ENCODE measurements at regions of chr6 and their contacts with region 1.

Region 1: DNA sequence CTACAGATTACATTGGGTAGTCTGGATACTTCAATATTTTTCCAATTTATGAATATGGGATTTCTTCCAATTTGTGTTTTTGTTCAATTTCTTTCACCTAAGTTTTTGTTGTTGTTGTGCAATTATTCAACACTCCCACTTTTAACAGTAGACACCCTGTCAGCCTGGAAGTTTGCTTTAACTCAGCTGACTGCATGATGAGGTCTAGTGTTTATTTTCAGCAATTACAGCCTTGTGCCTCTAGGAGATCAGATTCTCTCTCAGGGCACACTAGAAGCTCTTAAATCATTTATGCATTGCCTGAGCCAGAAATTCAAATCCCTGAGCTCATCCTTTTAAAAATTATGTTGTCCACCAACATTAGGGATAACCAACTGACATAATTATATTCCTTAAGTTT is 85.7 kb downstream of the MRAP2 start:
- DNase-seq: no peak
- H3K4me3 ChIP-seq: no peak overlapping the region
- H3K27ac ChIP-seq: no peak overlapping the region
- H3K4me1 ChIP-seq: no peaks in the 10 kb centered on the region
- H3K27me3 ChIP-seq: no peaks in the 10 kb centered on the region
- CTCF ChIP-seq: no peak
- POLR2A ChIP-seq: no peak

Region 2: DNA sequence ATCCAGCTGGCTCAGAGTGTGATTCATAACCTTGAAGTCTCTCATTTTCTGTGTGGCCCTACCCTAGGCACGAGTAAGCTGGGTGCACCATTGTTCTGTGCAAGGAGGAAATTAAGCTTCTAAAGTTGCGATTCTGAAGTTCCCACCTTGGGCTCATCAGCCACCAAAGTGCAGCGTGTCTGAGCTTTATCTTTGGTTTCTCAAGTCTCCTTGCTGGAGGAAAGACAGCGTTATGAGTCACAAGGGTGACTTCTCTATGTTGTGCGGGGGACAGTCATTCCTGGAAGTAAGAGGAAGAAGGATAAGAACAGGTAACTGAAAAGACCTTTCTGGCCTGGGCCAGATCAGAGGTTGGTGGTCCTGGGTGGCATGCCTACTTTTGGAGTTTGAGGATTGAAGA is 68.8 kb before region 1 on chr6:
- intact Hi-C with region 1: no loop called
- DNase-seq: no peak
- H3K4me3 ChIP-seq: no peak overlapping the region
- H3K27ac ChIP-seq: no peak overlapping the region
- H3K4me1 ChIP-seq: no peaks in the 10 kb centered on the region
- H3K27me3 ChIP-seq: no peaks in the 10 kb centered on the region
- CTCF ChIP-seq: no peak
- POLR2A ChIP-seq: no peak

Region 3: GRCh38 chr6:85660181-85660611 is 1540.9 kb after region 1 on chr6:
- intact Hi-C with region 1: loop called (anchors 5 kb)
- DNase-seq: no peak
- H3K4me3 ChIP-seq: no peak overlapping the region
- H3K27ac ChIP-seq: no peak overlapping the region
- H3K4me1 ChIP-seq: no peaks in the 10 kb centered on the region
- H3K27me3 ChIP-seq: no peaks in the 10 kb centered on the region
- CTCF ChIP-seq: no peak
- POLR2A ChIP-seq: no peak

Measured in breast epithelium (tissue), 4 donors.